A673 (cell line): ENCODE measurements at regions of chr13 and their contacts with region 1.

Region 1: GRCh38 chr13:62014299-62014698 is 598.6 kb upstream of the PCDH20 start:
- DNase-seq: peak; percentile 64
- H3K4me3 ChIP-seq: no peak overlapping the region
- H3K27ac ChIP-seq: no peak overlapping the region
- H3K4me1 ChIP-seq: no peaks in the 10 kb centered on the region
- H3K27me3 ChIP-seq: no peaks in the 10 kb centered on the region
- CTCF ChIP-seq: peak; percentile 59

Region 2: DNA sequence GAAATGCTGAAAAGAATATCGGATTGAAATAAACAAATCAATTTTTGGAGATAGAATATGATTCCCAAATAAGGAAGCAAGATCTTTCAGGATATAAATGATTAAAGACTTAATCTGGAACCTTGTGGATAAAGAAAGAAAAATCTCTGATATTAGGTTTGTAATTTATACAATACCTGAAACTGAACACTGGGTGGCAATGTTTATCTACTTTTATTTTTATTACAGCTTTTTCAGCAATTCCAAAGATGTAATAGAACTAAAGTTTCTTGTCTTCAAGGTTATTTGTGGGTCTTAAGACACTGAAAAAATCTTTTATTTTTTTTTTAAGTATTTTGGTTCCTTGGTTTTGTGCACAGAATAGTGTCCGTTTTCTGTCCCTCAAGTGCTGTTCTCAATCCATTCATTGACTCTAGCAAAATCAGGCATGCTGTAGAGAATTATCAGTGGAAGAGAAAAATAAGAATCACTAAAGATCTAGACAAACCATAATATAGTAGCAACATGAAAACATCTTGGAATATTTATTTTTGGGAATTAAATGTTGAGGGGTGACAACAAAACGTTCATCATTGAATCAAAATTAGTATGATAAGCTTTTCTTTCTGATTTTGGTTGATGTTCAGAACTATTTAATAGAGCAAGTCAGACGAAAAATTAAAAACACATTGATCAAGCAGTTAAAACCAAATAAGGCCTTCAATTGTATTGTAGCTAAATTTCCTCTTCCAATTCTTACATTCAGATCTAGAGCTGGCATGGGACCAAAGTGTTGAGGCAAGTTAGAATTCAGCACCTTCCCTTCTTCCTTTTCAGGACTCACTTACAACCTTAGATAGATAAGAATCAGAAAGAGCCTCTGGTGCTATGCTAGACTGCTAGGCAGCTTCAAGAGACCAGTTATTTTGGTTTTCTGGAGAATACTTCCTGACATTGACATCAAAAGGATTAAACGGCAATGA is 105.7 kb after region 1 on chr13:
- CTCF ChIA-PET with region 1: no interaction called
- POLR2A ChIA-PET with region 1: no interaction called
- intact Hi-C with region 1: loop called (anchors 5 kb)
- DNase-seq: peak; percentile 56
- H3K4me3 ChIP-seq: no peak overlapping the region
- H3K27ac ChIP-seq: no peak overlapping the region
- H3K4me1 ChIP-seq: no peaks in the 10 kb centered on the region
- H3K27me3 ChIP-seq: no peaks in the 10 kb centered on the region
- CTCF ChIP-seq: peak; percentile 56